ENCODE measurements at regions of chr4 and their contacts with region 1.

Region 1: GRCh38 chr4:101419324-101420135 is 72.2 kb upstream of the PPP3CA start:
- DNase-seq: no peak
- H3K4me3 Mint-ChIP-seq: no peak overlapping the region
- H3K27ac Mint-ChIP-seq: no peak overlapping the region
- H3K4me1 Mint-ChIP-seq: peaks cover 35% of the 10 kb centered on the region
- H3K27me3 Mint-ChIP-seq: peaks cover 38% of the 10 kb centered on the region

Region 2: GRCh38 chr4:100063355-100063754 is 1356.2 kb before region 1 on chr4:
- CTCF ChIA-PET with region 1: no interaction called
- POLR2A ChIA-PET with region 1: no interaction called
- intact Hi-C with region 1: no loop called
- DNase-seq: no peak
- H3K4me3 Mint-ChIP-seq: no peak overlapping the region
- H3K27ac Mint-ChIP-seq: no peak overlapping the region
- H3K4me1 Mint-ChIP-seq: no peaks in the 10 kb centered on the region
- H3K27me3 Mint-ChIP-seq: peaks cover 13% of the 10 kb centered on the region

Region 3: GRCh38 chr4:100082852-100083251 is 1336.7 kb before region 1 on chr4:
- CTCF ChIA-PET with region 1: no interaction called
- POLR2A ChIA-PET with region 1: no interaction called
- intact Hi-C with region 1: loop called (anchors 2 kb)
- DNase-seq: no peak
- H3K4me3 Mint-ChIP-seq: no peak overlapping the region
- H3K27ac Mint-ChIP-seq: peak overlapping the region; percentile 64
- H3K4me1 Mint-ChIP-seq: peaks cover 37% of the 10 kb centered on the region
- H3K27me3 Mint-ChIP-seq: peaks cover 7% of the 10 kb centered on the region

Region 4: DNA sequence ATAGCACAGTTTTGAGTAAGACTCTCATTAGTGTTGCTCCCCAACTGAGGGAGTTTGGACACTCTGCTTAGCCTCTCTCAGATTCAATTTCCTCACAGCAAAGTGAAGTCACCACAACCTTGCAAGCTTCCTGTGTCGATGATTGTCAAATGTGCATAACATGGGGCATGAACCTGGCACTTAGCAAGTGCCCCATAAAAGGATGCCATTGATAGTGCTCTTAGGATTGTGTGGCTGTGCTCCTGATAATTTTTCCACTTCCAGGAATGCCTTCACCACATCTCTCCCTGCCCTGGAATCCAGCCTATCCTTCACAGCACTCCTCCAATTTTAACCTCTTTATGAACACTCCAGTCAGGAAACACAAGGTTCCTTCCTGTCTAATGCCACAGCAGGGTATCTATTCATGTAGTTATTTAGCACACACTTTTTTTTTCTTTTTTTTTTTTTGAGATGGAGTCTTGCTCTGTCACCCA is 381.6 kb before region 1 on chr4:
- CTCF ChIA-PET with region 1: no interaction called
- POLR2A ChIA-PET with region 1: no interaction called
- intact Hi-C with region 1: loop called (anchors 1 kb)
- DNase-seq: peak; percentile 44
- H3K4me3 Mint-ChIP-seq: no peak overlapping the region
- H3K27ac Mint-ChIP-seq: peak overlapping the region; percentile 52
- H3K4me1 Mint-ChIP-seq: peaks cover 27% of the 10 kb centered on the region
- H3K27me3 Mint-ChIP-seq: no peaks in the 10 kb centered on the region

Region 5: GRCh38 chr4:101205916-101206315 is 213.6 kb before region 1 on chr4:
- CTCF ChIA-PET with region 1: no interaction called
- POLR2A ChIA-PET with region 1: interaction called, 3 read pairs
- intact Hi-C with region 1: loop called (anchors 2 kb)
- DNase-seq: peak; percentile 60
- H3K4me3 Mint-ChIP-seq: no peak overlapping the region
- H3K27ac Mint-ChIP-seq: peak overlapping the region; percentile 15
- H3K4me1 Mint-ChIP-seq: peaks cover 22% of the 10 kb centered on the region
- H3K27me3 Mint-ChIP-seq: no peaks in the 10 kb centered on the region

Region 6: GRCh38 chr4:101321481-101322042 is 98.0 kb before region 1 on chr4:
- CTCF ChIA-PET with region 1: no interaction called
- POLR2A ChIA-PET with region 1: no interaction called
- intact Hi-C with region 1: no loop called
- DNase-seq: no peak
- H3K4me3 Mint-ChIP-seq: no peak overlapping the region
- H3K27ac Mint-ChIP-seq: no peak overlapping the region
- H3K4me1 Mint-ChIP-seq: peaks cover 17% of the 10 kb centered on the region
- H3K27me3 Mint-ChIP-seq: no peaks in the 10 kb centered on the region

Region 7: DNA sequence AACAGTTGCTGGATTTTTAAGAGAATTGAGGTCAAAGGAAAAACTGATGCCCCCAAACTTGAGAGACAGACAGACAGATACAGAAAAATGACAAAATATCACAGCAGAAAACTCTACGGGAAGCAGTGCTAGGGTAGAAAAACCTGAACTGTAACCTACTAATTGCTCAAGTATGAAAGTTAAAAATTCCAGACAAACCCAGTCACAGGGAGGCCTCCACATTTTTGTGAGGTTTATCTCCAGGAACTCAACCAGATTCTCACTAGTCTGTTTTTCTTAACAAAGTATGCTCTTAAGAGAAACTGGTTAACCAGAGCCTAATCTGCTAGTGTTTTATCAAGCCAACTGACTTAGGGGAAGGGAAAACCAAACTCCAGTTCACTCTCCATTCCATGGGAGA is 52.3 kb before region 1 on chr4:
- CTCF ChIA-PET with region 1: no interaction called
- POLR2A ChIA-PET with region 1: no interaction called
- intact Hi-C with region 1: no loop called
- DNase-seq: no peak
- H3K4me3 Mint-ChIP-seq: no peak overlapping the region
- H3K27ac Mint-ChIP-seq: no peak overlapping the region
- H3K4me1 Mint-ChIP-seq: no peaks in the 10 kb centered on the region
- H3K27me3 Mint-ChIP-seq: peaks cover 16% of the 10 kb centered on the region

Region 8: DNA sequence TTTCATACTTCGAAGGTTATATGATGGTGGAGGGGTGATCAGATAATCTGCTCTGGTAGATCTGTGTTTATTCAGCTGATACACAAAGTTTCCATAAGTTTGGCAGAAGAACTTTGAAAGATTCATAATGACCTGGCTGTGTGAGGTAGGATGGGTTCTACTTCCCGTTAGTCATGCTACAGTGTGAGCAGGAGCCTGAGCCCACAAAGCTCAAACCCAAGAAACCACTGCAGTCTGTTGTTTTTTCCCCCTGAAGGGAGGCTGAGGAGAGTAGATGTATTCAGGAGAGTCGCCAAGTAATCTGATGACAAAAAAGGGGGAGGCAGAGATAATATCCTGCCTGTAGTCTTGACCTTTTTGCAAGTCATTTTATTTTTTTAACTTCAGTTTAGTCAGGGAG is 19.4 kb before region 1 on chr4:
- CTCF ChIA-PET with region 1: no interaction called
- POLR2A ChIA-PET with region 1: interaction called, 6 read pairs
- intact Hi-C with region 1: loop called (anchors 1 kb)
- DNase-seq: peak; percentile 47
- H3K4me3 Mint-ChIP-seq: no peak overlapping the region
- H3K27ac Mint-ChIP-seq: no peak overlapping the region
- H3K4me1 Mint-ChIP-seq: peaks cover 3% of the 10 kb centered on the region
- H3K27me3 Mint-ChIP-seq: peaks cover 3% of the 10 kb centered on the region

Region 9: GRCh38 chr4:101682946-101683345 is 263.4 kb after region 1 on chr4:
- CTCF ChIA-PET with region 1: no interaction called
- POLR2A ChIA-PET with region 1: no interaction called
- intact Hi-C with region 1: no loop called
- DNase-seq: no peak
- H3K4me3 Mint-ChIP-seq: no peak overlapping the region
- H3K27ac Mint-ChIP-seq: no peak overlapping the region
- H3K4me1 Mint-ChIP-seq: no peaks in the 10 kb centered on the region
- H3K27me3 Mint-ChIP-seq: peaks cover 6% of the 10 kb centered on the region

Region 10: GRCh38 chr4:102344954-102345794 is 925.6 kb after region 1 on chr4 and contains the start of gene SLC39A8:
- CTCF ChIA-PET with region 1: no interaction called
- POLR2A ChIA-PET with region 1: no interaction called
- intact Hi-C with region 1: loop called (anchors 5 kb)
- DNase-seq: peak; percentile 95
- H3K4me3 Mint-ChIP-seq: peak within 1 kb of the TSS; percentile 78
- H3K27ac Mint-ChIP-seq: peak within 1 kb of the TSS; percentile 96
- H3K4me1 Mint-ChIP-seq: peaks cover 43% of the 10 kb centered on the region
- H3K27me3 Mint-ChIP-seq: peaks cover 1% of the 10 kb centered on the region
- total RNA-seq, gene SLC39A8: 64.6 to 66.9 TPM